IMR-90 (cell line): ENCODE measurements at regions of chr6 and their contacts with region 1.

Region 1: DNA sequence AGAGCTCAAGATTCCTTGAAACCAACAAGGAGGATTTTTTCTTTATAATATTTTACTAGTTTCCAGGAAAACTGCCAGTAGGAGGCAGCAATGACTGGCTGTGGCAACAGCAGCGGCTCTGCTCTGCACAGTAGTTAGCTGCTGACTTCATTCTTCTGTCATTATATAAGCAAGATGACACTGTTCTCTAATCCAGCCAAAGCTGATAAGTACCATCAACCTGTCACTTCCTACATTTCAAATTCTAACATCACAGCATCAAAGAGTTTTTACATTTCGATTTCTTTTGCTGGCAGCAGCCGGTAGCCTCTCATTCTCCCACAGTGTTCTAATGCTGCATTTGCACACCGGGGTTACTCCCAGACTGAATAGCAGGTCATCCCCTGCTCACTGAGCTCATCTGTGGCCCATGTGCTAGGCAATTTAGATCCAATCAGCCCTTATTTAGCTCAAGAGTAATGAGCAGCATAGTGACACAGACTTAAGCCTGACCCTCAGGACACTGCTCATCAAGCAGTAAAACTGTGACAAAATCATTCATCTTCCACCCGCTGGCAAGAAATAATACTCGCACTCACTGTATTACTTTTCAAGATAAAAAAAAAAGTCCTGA is 67.8 kb downstream of the MMS22L start:
- DNase-seq: peak; percentile 76
- ATAC-seq: peak; percentile 97
- H3K4me3 ChIP-seq: no peak overlapping the region
- H3K27ac ChIP-seq: no peak overlapping the region
- H3K4me1 ChIP-seq: no peaks in the 10 kb centered on the region
- H3K27me3 ChIP-seq: no peaks in the 10 kb centered on the region
- CTCF ChIP-seq: peak; percentile 72
- POLR2A ChIP-seq: no peak
- RAD21 ChIP-seq: peak; percentile 81

Region 2: GRCh38 chr6:97059473-97059872 is 155.8 kb before region 1 on chr6:
- CTCF ChIA-PET with region 1: no interaction called
- POLR2A ChIA-PET with region 1: no interaction called
- dilution Hi-C with region 1: no loop called
- in situ Hi-C with region 1: no loop called
- intact Hi-C with region 1: no loop called
- DNase-seq: peak; percentile 37
- ATAC-seq: peak; percentile 76
- H3K4me3 ChIP-seq: no peak overlapping the region
- H3K27ac ChIP-seq: no peak overlapping the region
- H3K4me1 ChIP-seq: no peaks in the 10 kb centered on the region
- H3K27me3 ChIP-seq: peaks cover 4% of the 10 kb centered on the region
- CTCF ChIP-seq: peak; percentile 60
- POLR2A ChIP-seq: no peak
- RAD21 ChIP-seq: peak; percentile 64

Region 3: GRCh38 chr6:97195117-97195516 is 20.1 kb before region 1 on chr6:
- CTCF ChIA-PET with region 1: interaction called, 17 read pairs
- POLR2A ChIA-PET with region 1: no interaction called
- dilution Hi-C with region 1: no loop called
- in situ Hi-C with region 1: no loop called
- intact Hi-C with region 1: no loop called
- DNase-seq: peak; percentile 24
- ATAC-seq: no peak
- H3K4me3 ChIP-seq: no peak overlapping the region
- H3K27ac ChIP-seq: no peak overlapping the region
- H3K4me1 ChIP-seq: peaks cover 2% of the 10 kb centered on the region; the same call in 1 of the 2 replicates
- H3K27me3 ChIP-seq: no peaks in the 10 kb centered on the region
- CTCF ChIP-seq: no peak
- POLR2A ChIP-seq: no peak
- RAD21 ChIP-seq: no peak

Region 4: GRCh38 chr6:97203343-97203742 is 11.9 kb before region 1 on chr6:
- CTCF ChIA-PET with region 1: interaction called, 17 read pairs
- POLR2A ChIA-PET with region 1: no interaction called
- dilution Hi-C with region 1: no loop called
- in situ Hi-C with region 1: no loop called
- intact Hi-C with region 1: no loop called
- DNase-seq: peak; percentile 53
- ATAC-seq: peak; percentile 71
- H3K4me3 ChIP-seq: no peak overlapping the region
- H3K27ac ChIP-seq: no peak overlapping the region
- H3K4me1 ChIP-seq: no peaks in the 10 kb centered on the region
- H3K27me3 ChIP-seq: no peaks in the 10 kb centered on the region
- CTCF ChIP-seq: no peak
- POLR2A ChIP-seq: no peak
- RAD21 ChIP-seq: no peak

Region 5: DNA sequence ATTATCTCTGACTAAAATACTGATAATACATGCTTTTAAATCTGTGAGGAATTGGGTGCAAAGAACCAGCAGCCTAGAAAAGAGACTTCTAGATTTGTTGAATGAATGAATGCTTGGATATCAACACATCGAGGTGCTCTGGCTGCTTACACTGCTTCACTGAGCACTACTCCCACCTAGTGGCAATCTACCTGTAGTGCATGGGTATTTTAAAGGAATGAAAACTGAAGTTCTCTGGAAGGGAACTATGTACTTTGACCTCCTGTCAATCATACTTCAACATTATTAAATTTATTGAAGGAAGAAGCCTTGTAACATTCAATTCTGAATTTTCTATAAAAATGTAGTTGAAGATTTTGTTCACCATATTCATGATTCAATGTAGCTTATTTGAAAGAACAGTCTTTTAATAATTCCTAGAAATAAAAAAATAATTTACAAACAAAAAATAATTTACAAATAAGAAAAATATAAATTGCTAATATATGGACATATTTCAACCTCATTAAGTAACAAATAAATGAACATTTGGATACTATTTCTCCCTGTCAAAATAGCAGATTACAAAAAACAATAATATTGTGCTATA is 179.0 kb after region 1 on chr6:
- CTCF ChIA-PET with region 1: interaction called, 7 read pairs
- POLR2A ChIA-PET with region 1: no interaction called
- dilution Hi-C with region 1: no loop called
- in situ Hi-C with region 1: no loop called
- intact Hi-C with region 1: loop called (anchors 1 kb)
- DNase-seq: peak; percentile 57
- ATAC-seq: peak; percentile 86
- H3K4me3 ChIP-seq: no peak overlapping the region
- H3K27ac ChIP-seq: no peak overlapping the region
- H3K4me1 ChIP-seq: no peaks in the 10 kb centered on the region
- H3K27me3 ChIP-seq: peaks cover 3% of the 10 kb centered on the region
- CTCF ChIP-seq: peak; percentile 91
- POLR2A ChIP-seq: no peak
- RAD21 ChIP-seq: peak; percentile 94

Region 6: GRCh38 chr6:98092331-98092730 is 877.1 kb after region 1 on chr6:
- CTCF ChIA-PET with region 1: no interaction called
- POLR2A ChIA-PET with region 1: no interaction called
- dilution Hi-C with region 1: no loop called
- in situ Hi-C with region 1: no loop called
- intact Hi-C with region 1: no loop called
- DNase-seq: no peak
- ATAC-seq: no peak
- H3K4me3 ChIP-seq: no peak overlapping the region
- H3K27ac ChIP-seq: no peak overlapping the region
- H3K4me1 ChIP-seq: no peaks in the 10 kb centered on the region
- H3K27me3 ChIP-seq: no peaks in the 10 kb centered on the region
- CTCF ChIP-seq: no peak
- POLR2A ChIP-seq: no peak
- RAD21 ChIP-seq: no peak